ENCODE measurements at regions of chr11 and their contacts with region 1.

Region 1: DNA sequence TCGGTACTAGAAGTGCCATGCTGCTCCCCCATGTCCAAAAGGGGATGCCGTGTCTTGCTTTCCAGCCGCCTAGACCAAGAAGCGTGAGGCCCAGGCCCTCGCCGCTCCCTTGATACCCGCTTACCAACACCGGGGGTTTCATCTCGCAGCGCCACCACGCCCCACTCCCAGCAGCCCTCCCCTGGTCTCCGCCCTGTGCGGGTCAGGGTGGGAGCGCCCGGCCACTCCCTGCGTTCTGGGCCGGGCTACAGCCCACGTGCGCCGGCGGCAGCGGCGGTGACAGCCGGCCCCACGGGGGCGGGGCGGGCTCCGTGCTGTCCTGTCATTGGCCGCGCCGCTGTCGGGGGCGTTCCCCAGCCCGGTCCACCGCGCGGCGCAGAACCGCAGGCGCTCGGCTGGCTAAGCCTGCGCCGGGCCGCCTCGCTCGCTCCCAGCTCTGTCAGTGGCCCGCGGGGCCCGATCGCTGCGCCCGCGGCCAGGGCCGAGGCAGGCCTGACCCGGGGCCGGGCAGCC is at the start of gene MICAL2:
- DNase-seq: peak; percentile 90 to 96
- H3K4me3 ChIP-seq: peak within 1 kb of the TSS; percentile 61
- H3K4me3 Mint-ChIP-seq: peak within 1 kb of the TSS; percentile 83
- H3K27ac Mint-ChIP-seq: peak within 1 kb of the TSS; percentile 83
- H3K4me1 ChIP-seq: peaks cover 39% of the 10 kb centered on the region
- H3K4me1 Mint-ChIP-seq: peaks cover 38% of the 10 kb centered on the region
- H3K27me3 ChIP-seq: no peaks in the 10 kb centered on the region
- H3K27me3 Mint-ChIP-seq: no peaks in the 10 kb centered on the region
- CTCF ChIP-seq: no peak
- total RNA-seq, gene MICAL2: 247 and 272 TPM in 2 replicates

Region 2: DNA sequence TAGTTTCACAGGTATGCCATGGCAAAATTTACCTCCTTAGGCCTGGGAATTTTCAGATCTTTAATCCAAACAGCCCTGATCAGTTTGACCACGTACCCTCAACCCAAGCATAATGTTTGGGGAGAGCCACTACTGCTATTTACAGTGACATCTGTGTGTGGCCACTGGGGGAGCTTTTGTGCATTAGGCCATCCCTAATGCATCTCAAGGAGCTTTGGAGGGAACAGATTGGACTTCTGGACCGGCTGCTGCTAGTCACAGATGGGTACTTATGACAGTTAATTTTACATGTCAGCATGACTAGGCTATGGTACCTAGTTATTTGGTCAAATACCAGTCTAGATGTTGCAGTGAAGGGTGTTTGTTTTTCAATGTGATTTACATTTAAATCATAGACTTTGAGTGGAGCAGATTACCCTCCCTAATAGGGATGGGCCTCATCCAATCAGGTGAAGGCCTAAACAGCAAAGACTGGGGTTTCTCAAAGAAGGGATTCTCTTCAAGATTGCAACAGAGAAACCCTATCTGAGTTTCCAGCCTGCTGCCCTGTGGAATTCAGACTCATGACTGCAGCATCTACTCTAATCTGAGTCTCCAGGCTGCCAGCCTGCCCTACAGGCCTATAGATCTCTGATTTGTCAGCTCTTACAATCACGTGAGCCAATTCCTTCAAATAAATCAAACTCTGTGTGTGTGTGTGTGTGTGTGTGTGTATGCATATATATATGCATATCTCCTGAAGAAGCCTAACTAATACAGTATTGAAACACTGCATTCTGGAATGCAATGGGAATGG is 450.5 kb before region 1 on chr11:
- CTCF ChIA-PET with region 1: no interaction called
- POLR2A ChIA-PET with region 1: no interaction called
- intact Hi-C with region 1: no loop called
- DNase-seq: no peak
- H3K4me3 ChIP-seq: no peak overlapping the region
- H3K4me3 Mint-ChIP-seq: no peak overlapping the region
- H3K27ac Mint-ChIP-seq: no peak overlapping the region
- H3K4me1 ChIP-seq: no peaks in the 10 kb centered on the region
- H3K4me1 Mint-ChIP-seq: no peaks in the 10 kb centered on the region
- H3K27me3 ChIP-seq: peaks cover 1% of the 10 kb centered on the region; the same call in 1 of the 2 replicates
- H3K27me3 Mint-ChIP-seq: peaks cover 16% of the 10 kb centered on the region
- CTCF ChIP-seq: peak; percentile 11 to 21

Region 3: DNA sequence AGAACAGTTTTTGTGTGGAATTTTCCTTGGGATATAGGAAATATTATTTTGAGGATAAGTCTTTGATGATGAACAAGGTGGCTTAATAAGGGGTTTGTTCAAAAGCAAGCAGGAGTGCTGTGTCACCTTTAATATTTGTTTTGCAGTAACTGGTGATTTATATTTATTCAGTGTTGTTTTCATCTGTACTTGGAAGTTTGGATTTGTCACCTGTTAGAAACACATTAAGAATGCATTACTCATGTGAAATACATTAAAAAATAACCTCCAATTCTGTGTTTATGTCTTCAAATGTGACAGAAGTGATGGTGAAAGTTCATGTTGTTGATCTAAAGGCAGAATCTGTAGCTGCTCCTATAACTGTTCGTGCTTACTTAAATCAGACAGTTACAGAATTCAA is 172.3 kb before region 1 on chr11:
- CTCF ChIA-PET with region 1: no interaction called
- POLR2A ChIA-PET with region 1: no interaction called
- intact Hi-C with region 1: no loop called
- DNase-seq: no peak
- H3K4me3 ChIP-seq: no peak overlapping the region
- H3K4me3 Mint-ChIP-seq: no peak overlapping the region
- H3K27ac Mint-ChIP-seq: no peak overlapping the region
- H3K4me1 ChIP-seq: no peaks in the 10 kb centered on the region
- H3K4me1 Mint-ChIP-seq: peaks cover 8% of the 10 kb centered on the region
- H3K27me3 ChIP-seq: no peaks in the 10 kb centered on the region
- H3K27me3 Mint-ChIP-seq: no peaks in the 10 kb centered on the region
- CTCF ChIP-seq: no peak

Region 4: GRCh38 chr11:12087075-12088004 is 22.9 kb before region 1 on chr11:
- CTCF ChIA-PET with region 1: interaction called, 4 read pairs
- POLR2A ChIA-PET with region 1: interaction called, 3 read pairs
- intact Hi-C with region 1: loop called (anchors 2 kb)
- DNase-seq: peak; percentile 34 to 42
- H3K4me3 ChIP-seq: no peak overlapping the region
- H3K4me3 Mint-ChIP-seq: no peak overlapping the region
- H3K27ac Mint-ChIP-seq: peak overlapping the region; percentile 78
- H3K4me1 ChIP-seq: peaks cover 73% of the 10 kb centered on the region
- H3K4me1 Mint-ChIP-seq: peaks cover 60% of the 10 kb centered on the region
- H3K27me3 ChIP-seq: no peaks in the 10 kb centered on the region
- H3K27me3 Mint-ChIP-seq: no peaks in the 10 kb centered on the region
- CTCF ChIP-seq: peak; percentile 7 to 11

Region 5: DNA sequence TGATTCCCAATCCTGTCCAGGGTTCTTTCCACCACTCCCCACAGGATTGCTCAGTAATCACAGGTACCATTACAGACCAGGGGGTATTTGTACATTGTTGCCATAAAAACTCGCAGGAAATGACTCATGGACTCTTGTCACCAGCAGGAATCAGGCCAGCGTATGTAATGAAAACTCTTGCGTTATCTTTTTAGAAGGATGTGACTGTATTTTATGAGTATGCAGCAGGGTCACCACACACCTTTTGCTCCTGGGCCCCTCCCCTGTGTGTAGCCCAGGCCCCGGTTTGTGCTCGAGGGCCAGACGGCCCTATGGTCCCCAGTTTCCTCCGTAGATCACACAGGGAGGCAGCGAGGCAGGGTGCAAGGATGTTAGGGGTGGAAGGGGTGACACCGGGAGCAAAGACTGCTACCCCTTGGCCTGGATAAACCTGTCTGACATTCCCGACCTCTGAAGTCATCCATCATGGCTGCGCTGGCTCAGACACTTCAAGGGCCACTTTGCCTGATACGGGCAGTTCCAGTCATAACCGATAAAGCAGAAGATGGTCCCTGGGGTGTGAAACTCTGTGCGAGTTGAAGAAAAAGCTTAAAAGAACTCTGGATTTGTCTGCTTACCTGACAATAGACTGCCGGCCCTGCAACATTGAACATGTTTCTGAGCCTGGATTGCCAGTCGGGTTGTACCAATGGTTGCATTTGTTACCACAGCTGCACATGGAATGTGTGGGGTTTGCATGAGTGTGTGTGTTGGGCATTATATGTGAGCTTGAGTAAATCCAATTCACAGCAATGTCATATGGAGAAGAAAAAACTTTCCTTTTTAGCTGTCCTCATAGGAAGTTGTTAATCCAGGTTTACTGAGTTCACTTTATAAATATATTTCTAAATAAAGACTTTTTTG is 57.1 kb after region 1 on chr11:
- CTCF ChIA-PET with region 1: no interaction called
- POLR2A ChIA-PET with region 1: no interaction called
- intact Hi-C with region 1: loop called (anchors 2 kb)
- DNase-seq: peak; percentile 77 to 91
- H3K4me3 ChIP-seq: no peak overlapping the region
- H3K4me3 Mint-ChIP-seq: peak overlapping the region; percentile 48
- H3K27ac Mint-ChIP-seq: peak overlapping the region; percentile 70
- H3K4me1 ChIP-seq: peaks cover 71% of the 10 kb centered on the region
- H3K4me1 Mint-ChIP-seq: peaks cover 63% of the 10 kb centered on the region
- H3K27me3 ChIP-seq: no peaks in the 10 kb centered on the region
- H3K27me3 Mint-ChIP-seq: no peaks in the 10 kb centered on the region
- CTCF ChIP-seq: no peak